ENCODE measurements at regions of chr17 and their contacts with region 1.

Region 1: DNA sequence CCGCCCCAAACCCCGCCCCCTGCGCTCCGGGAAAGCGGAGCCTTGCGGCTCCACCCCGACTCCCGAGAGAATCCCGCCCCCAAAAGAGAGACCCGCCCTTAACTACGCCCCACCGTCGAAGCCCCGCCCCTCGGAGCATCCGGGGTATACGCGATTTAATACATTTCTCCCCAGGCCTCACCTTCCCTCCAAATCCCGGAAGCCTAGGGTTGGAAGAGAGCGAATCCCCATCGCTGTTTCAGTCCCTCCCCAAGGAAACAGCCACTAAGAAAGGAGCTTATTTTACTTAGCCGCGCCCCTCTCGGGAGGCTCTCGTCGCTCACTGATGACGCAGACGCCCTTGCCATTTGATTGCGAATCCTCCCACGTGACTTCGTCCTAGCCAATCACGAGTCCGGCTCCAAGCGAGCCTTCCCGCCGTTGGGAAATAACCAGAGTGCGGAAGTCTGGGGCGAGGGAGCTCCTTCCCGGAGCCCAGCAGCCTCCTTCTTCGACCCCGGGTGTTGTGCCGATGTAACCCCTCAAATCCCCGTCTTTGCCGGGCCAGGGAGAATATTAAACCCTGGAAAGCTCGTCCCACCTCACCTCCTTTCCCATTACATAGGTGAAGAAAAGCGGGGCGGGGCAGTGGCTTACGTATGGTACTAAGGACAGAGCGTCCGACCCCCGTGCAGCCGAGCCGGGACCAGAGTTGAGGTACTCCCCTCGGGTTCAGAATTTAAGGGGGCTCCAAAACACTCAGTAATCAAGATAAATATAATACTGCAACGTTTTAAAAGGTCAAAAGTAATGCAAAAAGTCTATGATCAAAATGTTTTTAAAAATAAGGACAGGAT is 462 bp upstream of the FDXR start:
- DNase-seq: peak; percentile 98 to 100 (median 99)
- ATAC-seq: peak; percentile 93
- H3K4me3 ChIP-seq: peak overlapping the region; percentile 75 to 92
- H3K4me3 Mint-ChIP-seq: peak overlapping the region; percentile 96
- H3K27ac ChIP-seq: peak overlapping the region; percentile 78 to 99
- H3K27ac Mint-ChIP-seq: peak overlapping the region; percentile 99
- H3K4me1 ChIP-seq: peaks cover 17% of the 10 kb centered on the region
- H3K4me1 Mint-ChIP-seq: peaks cover 23% of the 10 kb centered on the region
- H3K27me3 ChIP-seq: no peaks in the 10 kb centered on the region
- H3K27me3 Mint-ChIP-seq: no peaks in the 10 kb centered on the region
- CTCF ChIP-seq: no peak

Region 2: DNA sequence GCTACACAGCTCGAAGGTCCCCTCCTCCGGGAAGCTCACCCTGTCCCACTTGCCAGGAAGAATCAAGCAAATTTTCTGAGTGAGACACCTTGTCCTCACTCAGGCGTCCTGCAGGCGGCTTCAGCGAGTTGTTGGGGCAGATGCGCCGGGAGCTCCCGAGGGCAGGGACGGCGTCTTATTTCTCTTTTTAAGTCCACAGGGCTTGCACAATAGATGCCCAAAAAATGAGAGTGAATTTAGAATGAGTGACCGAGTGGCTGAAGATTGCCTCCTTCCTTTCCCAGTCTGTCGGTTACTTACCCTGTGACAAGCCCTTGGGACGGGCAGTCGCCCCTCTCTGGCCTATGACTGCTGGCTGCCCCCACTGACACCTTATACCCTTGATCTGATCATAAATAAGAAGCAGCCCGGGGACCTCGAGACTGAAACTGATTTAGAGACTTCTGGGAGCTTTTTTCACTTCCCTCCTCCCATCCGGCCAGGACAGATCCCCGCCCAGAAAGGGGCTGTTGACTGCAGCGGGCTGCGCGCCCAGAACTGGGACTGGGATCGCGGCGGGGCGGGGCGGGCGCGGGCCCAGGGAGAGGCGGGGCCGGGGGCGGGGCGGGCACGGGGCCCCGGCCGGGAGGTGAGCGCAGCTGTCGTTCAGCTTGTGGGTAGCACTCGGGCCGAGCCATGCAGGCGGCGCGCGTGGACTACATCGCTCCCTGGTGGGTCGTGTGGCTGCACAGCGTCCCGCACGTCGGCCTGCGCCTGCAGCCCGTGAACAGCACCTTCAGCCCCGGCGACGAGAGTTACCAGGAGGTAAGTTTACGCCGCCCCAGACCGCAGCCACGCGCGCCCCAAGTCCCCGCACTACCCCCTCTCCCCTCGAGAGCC is 660.1 kb before region 1 on chr17 and contains the start of gene TTYH2:
- CTCF ChIA-PET with region 1: no interaction called
- POLR2A ChIA-PET with region 1: no interaction called
- intact Hi-C with region 1: loop called (anchors 10 kb)
- DNase-seq: peak; percentile 34 to 86 (median 70)
- ATAC-seq: peak; percentile 69
- H3K4me3 ChIP-seq: peak within 1 kb of the TSS; percentile 48 to 50
- H3K4me3 Mint-ChIP-seq: peak within 1 kb of the TSS; percentile 88
- H3K27ac ChIP-seq: peak within 1 kb of the TSS; percentile 28 to 55
- H3K27ac Mint-ChIP-seq: peak within 1 kb of the TSS; percentile 89
- H3K4me1 ChIP-seq: peaks cover 37% of the 10 kb centered on the region
- H3K4me1 Mint-ChIP-seq: peaks cover 43% of the 10 kb centered on the region
- H3K27me3 ChIP-seq: no peaks in the 10 kb centered on the region
- H3K27me3 Mint-ChIP-seq: no peaks in the 10 kb centered on the region
- CTCF ChIP-seq: no peak
- total RNA-seq, gene TTYH2: 4.6 to 5.6 TPM

Region 3: GRCh38 chr17:74748529-74749365 is 124.5 kb before region 1 on chr17 and contains the start of gene NHERF1:
- CTCF ChIA-PET with region 1: interaction called, 3 read pairs
- POLR2A ChIA-PET with region 1: interaction called, 4 read pairs
- intact Hi-C with region 1: loop called in 1 of 2 experiments (anchors 1 kb)
- DNase-seq: peak; percentile 83 to 98 (median 92)
- ATAC-seq: peak; percentile 83
- H3K4me3 ChIP-seq: peak within 1 kb of the TSS; percentile 94 to 98
- H3K4me3 Mint-ChIP-seq: peak within 1 kb of the TSS; percentile 98
- H3K27ac ChIP-seq: peak within 1 kb of the TSS; percentile 60 to 80
- H3K27ac Mint-ChIP-seq: peak within 1 kb of the TSS; percentile 96
- H3K4me1 ChIP-seq: peaks cover 61% of the 10 kb centered on the region
- H3K4me1 Mint-ChIP-seq: peaks cover 67% of the 10 kb centered on the region
- H3K27me3 ChIP-seq: no peaks in the 10 kb centered on the region
- H3K27me3 Mint-ChIP-seq: no peaks in the 10 kb centered on the region
- CTCF ChIP-seq: no peak
- total RNA-seq, gene NHERF1: 72.5 to 73.7 TPM

Region 4: DNA sequence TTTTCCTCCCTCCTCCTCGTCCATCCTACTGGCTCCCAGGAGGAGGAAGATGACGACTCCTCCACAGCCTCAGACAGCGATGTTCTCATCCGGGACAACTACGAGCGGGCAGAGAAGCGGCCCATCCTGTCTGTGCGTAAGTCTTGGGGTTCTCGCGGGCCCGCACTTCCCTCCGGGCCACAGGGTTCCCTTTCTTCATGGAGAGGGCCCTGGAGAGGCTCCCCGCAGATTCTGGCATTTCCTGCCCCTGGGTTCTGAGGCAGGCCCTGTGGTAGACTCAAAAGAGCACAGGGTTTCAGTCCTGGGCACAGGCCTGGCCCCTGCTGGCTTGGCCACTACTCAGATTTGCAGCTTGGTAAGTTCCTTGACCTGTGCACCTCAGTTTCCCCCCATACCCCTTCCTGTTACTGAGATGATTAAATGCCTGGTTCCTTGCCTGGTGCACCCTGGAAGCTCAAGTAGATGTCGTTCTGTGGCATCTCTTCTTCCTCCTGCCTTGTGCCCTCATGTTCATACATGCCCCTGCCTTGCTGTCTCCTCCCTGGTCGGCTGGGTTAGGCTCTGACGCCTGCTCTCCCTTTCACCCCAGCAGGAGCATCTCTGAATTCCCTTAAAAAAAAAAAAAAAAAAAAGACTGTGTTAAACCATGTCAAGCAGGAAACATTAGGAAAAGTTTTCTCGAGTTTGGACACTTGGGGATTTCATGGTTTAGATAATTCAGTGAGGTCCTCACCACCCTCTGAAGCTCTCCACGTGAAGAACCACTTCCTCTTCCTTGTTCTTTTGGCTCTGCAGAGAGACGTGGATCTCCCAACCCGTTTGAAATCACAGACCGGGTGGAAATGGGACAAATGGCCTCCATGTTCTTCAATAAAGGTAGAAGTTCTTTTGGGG is 82.8 kb before region 1 on chr17:
- CTCF ChIA-PET with region 1: interaction called, 318 read pairs
- POLR2A ChIA-PET with region 1: interaction called, 5 read pairs
- intact Hi-C with region 1: no loop called
- DNase-seq: peak in 1 of 9 experiments; percentile 27
- ATAC-seq: no peak
- H3K4me3 ChIP-seq: peak overlapping the region in 1 of 2 experiments; percentile 5
- H3K4me3 Mint-ChIP-seq: peak overlapping the region; percentile 57
- H3K27ac ChIP-seq: no peak overlapping the region
- H3K27ac Mint-ChIP-seq: peak overlapping the region; percentile 71
- H3K4me1 ChIP-seq: peaks cover 33% of the 10 kb centered on the region
- H3K4me1 Mint-ChIP-seq: peaks cover 40% of the 10 kb centered on the region
- H3K27me3 ChIP-seq: no peaks in the 10 kb centered on the region
- H3K27me3 Mint-ChIP-seq: no peaks in the 10 kb centered on the region
- CTCF ChIP-seq: no peak

Region 5: GRCh38 chr17:75182569-75183450 is 309.6 kb after region 1 on chr17 and contains the start of gene SUMO2:
- CTCF ChIA-PET with region 1: no interaction called
- POLR2A ChIA-PET with region 1: no interaction called
- intact Hi-C with region 1: loop called in 1 of 2 experiments (anchors 2 kb)
- DNase-seq: peak; percentile 89 to 98 (median 95)
- ATAC-seq: peak; percentile 77
- H3K4me3 ChIP-seq: peak within 1 kb of the TSS; percentile 68 to 82
- H3K4me3 Mint-ChIP-seq: peak within 1 kb of the TSS; percentile 92
- H3K27ac ChIP-seq: peak within 1 kb of the TSS; percentile 95
- H3K27ac Mint-ChIP-seq: peak within 1 kb of the TSS; percentile 98
- H3K4me1 ChIP-seq: peaks cover 28% of the 10 kb centered on the region
- H3K4me1 Mint-ChIP-seq: peaks cover 46% of the 10 kb centered on the region
- H3K27me3 ChIP-seq: no peaks in the 10 kb centered on the region
- H3K27me3 Mint-ChIP-seq: no peaks in the 10 kb centered on the region
- CTCF ChIP-seq: no peak
- total RNA-seq, gene SUMO2: 192 to 203 TPM